A549 (cell line): ENCODE measurements at regions of chr11 and their contacts with region 1.

Region 1: DNA sequence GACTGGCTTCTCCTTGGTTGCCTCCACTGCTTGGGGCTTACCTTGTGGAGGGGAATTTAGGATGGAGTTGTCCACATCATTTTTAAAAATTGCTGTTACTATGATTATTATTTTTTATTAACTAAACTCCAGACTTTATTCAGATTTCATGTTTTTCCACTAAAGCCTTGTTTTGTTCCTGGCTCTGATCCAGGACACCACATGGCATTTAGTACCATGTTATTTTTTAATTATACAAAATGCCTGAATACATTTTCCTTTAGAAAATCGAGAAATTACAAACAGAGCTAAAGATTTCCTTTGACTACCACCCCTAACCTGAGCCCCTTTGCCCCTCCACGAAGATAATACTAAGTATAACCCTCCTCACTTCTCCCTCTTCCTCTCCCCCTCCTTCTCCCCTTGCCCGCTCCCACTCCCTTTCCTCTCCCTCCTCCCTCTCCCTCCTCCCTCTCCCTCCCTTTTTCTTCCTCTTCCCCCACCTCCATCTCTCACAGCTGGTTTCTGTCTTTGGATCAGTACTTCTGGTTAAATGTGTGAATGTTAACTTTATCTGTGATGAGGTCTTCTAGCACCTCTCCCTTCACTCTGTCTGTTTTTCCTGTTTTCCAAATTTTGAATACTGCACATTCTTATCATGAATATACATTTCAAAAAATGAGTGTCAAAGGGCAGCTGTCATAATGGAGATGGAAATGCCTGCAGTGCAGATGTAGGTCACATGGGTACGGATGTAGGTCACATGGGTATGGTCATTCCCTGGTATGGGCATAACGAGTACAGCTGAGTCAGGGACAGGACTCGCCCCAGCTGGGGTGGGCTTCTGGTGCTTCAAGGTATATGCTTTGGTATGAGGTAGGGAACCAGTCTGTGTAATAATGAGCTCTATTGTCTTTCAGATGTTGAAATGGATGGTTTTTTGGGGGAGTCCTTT is 54.4 kb upstream of the OR4B1 start:
- DNase-seq: no peak
- ATAC-seq: no peak
- H3K4me3 ChIP-seq: no peak overlapping the region
- H3K27ac ChIP-seq: no peak overlapping the region
- H3K4me1 ChIP-seq: peaks cover 14% of the 10 kb centered on the region; the same call in 2 of the 3 replicates
- CTCF ChIP-seq: no peak
- EP300 ChIP-seq: no peak
- POLR2A ChIP-seq: no peak
- RAD21 ChIP-seq: no peak

Region 2: GRCh38 chr11:48172818-48173609 is 10.8 kb after region 1 on chr11:
- CTCF ChIA-PET with region 1: interaction called, 28 read pairs
- POLR2A ChIA-PET with region 1: no interaction called
- DNase-seq: peak; percentile 54 to 78
- ATAC-seq: peak; percentile 73 to 80; a peak in 5 of 6 replicates
- H3K4me3 ChIP-seq: no peak overlapping the region
- H3K27ac ChIP-seq: no peak overlapping the region
- H3K4me1 ChIP-seq: peaks cover 18% of the 10 kb centered on the region; the same call in 2 of the 3 replicates
- CTCF ChIP-seq: peak; percentile 72
- EP300 ChIP-seq: no peak
- POLR2A ChIP-seq: no peak
- RAD21 ChIP-seq: peak; percentile 67 to 83